ENCODE measurements at regions of chr3 and their contacts with region 1.

Region 1: DNA sequence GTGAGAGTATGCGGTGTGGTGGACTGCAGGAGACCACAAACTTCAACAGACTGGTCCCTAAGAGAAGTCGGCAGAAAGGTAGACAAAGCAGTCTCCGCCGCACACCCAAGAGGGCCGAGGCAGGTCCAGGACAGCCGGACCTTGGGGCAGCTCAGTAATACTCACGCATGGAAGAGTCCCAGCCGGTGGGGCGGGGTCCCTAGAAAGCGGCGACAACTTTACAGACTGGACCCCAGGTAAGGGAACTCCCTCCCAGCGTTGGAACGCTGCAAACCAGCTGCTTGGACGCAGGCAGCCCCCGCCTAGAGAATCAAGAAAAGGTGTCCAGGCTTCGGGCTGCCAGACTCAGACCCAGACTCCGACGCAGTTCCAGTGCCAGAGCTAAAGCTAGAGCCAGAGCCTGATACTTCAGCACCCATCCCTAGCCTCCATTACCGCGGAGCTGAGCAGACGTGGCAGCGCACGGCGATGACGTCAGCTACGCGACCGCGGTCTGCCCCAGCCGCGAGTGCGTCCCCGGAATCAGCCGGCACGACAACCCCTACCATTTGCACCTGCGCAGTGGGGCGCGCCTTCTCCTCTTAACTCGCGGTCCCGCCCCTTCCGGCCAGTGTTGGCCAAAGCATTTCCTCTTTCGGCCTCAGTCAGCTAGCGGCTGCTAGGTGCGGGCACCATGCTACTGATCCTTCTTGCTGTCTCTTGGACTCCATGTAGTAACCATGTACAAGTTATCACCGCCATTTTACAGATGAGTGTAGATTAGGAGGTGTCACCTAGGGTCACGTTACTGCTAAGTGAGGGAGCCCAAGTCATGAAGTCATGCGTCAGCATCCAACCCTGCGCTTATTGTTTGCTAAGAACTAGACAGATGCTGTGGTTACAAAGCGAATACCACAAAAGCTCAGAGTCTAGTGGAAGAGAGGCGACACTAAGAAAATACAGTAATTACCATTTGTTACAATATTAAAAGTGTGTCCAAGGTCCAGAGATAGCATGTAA is at the start of gene TMEM39A:
- DNase-seq: peak; percentile 100
- ATAC-seq: peak; percentile 89 to 96 (median 90)
- H3K4me3 ChIP-seq: peak within 1 kb of the TSS; percentile 67
- H3K4me3 Mint-ChIP-seq: peak within 1 kb of the TSS; percentile 91
- H3K27ac ChIP-seq: peak within 1 kb of the TSS; percentile 100
- H3K27ac Mint-ChIP-seq: peak within 1 kb of the TSS; percentile 96 to 99
- H3K4me1 ChIP-seq: peaks cover 20% of the 10 kb centered on the region
- H3K4me1 Mint-ChIP-seq: peaks cover 35 to 48% of the 10 kb centered on the region in 2 donors
- H3K27me3 ChIP-seq: no peaks in the 10 kb centered on the region
- H3K27me3 Mint-ChIP-seq: no peaks in the 10 kb centered on the region
- CTCF ChIP-seq: no peak
- total RNA-seq, gene TMEM39A: 64.2 to 76.5 (median 64.7) TPM

Region 2: GRCh38 chr3:119240591-119241434 is 222.7 kb before region 1 on chr3 and contains the start of gene B4GALT4:
- intact Hi-C with region 1: loop called (anchors 5 kb)
- DNase-seq: peak; percentile 79 to 80
- ATAC-seq: peak; percentile 78 to 91 (median 84)
- H3K4me3 ChIP-seq: peak within 1 kb of the TSS; percentile 49
- H3K4me3 Mint-ChIP-seq: peak within 1 kb of the TSS; percentile 96
- H3K27ac ChIP-seq: peak within 1 kb of the TSS; percentile 79
- H3K27ac Mint-ChIP-seq: peak within 1 kb of the TSS; percentile 92 to 96
- H3K4me1 ChIP-seq: peaks cover 37% of the 10 kb centered on the region
- H3K4me1 Mint-ChIP-seq: peaks cover 29 to 37% of the 10 kb centered on the region in 2 donors
- H3K27me3 ChIP-seq: no peaks in the 10 kb centered on the region
- H3K27me3 Mint-ChIP-seq: no peaks in the 10 kb centered on the region
- CTCF ChIP-seq: no peak
- total RNA-seq, gene B4GALT4: 35.1 to 54.1 (median 48.8) TPM

Region 3: GRCh38 chr3:119293871-119294695 is 169.4 kb before region 1 on chr3 and contains the start of gene ARHGAP31:
- intact Hi-C with region 1: loop called (anchors 1 kb)
- DNase-seq: peak; percentile 81 to 94
- ATAC-seq: peak; percentile 65 to 82 (median 70)
- H3K4me3 ChIP-seq: peak within 1 kb of the TSS; percentile 82
- H3K4me3 Mint-ChIP-seq: peak within 1 kb of the TSS; percentile 95
- H3K27ac ChIP-seq: peak within 1 kb of the TSS; percentile 99
- H3K27ac Mint-ChIP-seq: peak within 1 kb of the TSS; percentile 95 to 97
- H3K4me1 ChIP-seq: peaks cover 60% of the 10 kb centered on the region
- H3K4me1 Mint-ChIP-seq: peaks cover 72 to 74% of the 10 kb centered on the region in 2 donors
- H3K27me3 ChIP-seq: peaks cover 9% of the 10 kb centered on the region
- H3K27me3 Mint-ChIP-seq: peaks cover 9 to 15% of the 10 kb centered on the region in 2 donors
- CTCF ChIP-seq: no peak
- total RNA-seq, gene ARHGAP31: 4.1 to 8.4 (median 8.4) TPM

Region 4: DNA sequence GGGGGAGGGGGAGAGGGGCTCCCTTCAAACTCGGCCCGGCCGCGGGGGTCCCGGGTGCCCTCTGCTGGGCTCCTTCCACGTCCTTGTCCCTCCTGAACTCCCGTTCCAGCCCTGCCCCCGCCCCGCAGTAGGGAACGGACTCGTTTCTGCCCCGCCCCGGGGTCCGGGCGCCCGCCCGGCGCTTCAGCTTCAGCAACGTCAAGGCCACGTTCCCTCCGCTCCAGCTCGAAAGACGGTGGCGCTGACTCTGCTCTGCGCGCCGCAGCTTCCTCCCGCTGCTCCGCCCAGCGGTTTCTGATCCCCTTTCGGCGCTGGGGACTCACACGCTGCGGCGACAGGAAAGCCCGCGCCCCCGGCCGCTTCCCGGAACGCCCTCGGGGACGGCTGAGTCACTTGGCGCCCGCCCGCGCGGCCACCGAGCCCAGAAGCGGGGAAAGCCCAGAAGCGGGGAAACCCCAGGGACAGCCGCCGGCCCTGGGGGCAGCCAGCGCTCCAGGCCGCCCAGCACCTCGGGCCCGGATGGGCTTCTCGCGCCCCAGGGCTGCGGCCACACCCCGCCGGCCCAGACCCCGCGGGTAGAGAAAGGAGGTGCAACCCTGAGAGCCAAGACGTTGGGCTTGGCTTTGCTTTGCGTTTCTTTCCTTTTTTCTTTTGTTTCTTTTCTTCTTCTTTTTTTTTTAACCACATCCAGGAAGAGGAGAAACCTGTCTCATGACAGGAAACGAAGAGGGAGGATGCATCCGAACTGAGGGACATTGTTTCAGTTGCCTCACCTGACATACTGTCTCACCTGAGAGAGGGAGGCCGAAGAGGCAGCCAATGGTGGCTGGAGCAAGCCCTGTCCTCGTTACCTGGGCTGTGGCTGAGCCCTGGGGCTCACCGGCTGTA is 140.4 kb before region 1 on chr3:
- intact Hi-C with region 1: loop called (anchors 1 kb)
- DNase-seq: peak; percentile 90 to 95
- ATAC-seq: peak; percentile 85 to 94 (median 89)
- H3K4me3 ChIP-seq: peak overlapping the region; percentile 83
- H3K4me3 Mint-ChIP-seq: peak overlapping the region; percentile 98
- H3K27ac ChIP-seq: peak overlapping the region; percentile 92
- H3K27ac Mint-ChIP-seq: peak overlapping the region; percentile 97 to 98
- H3K4me1 ChIP-seq: peaks cover 15% of the 10 kb centered on the region
- H3K4me1 Mint-ChIP-seq: peaks cover 12 to 31% of the 10 kb centered on the region in 2 donors
- H3K27me3 ChIP-seq: no peaks in the 10 kb centered on the region
- H3K27me3 Mint-ChIP-seq: no peaks in the 10 kb centered on the region
- CTCF ChIP-seq: no peak

Region 5: DNA sequence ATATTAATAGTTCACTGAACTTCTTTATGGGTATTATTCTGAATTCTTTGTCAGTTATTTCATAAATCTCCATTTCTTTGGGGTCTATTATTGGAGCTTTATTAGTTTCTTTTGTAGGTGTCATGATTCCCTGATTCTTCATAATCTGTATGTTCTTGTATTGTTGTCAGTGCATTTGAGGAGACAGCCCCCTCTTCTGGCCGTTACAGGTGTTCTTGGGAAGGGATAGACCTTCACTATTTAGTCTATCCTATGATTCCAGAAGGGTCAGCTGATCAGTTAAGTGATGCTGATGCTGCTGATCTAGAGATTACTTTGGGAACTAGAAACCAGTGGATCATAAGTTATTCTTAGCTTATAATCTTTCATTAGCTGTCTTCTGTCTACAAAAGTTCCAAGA is 34.9 kb before region 1 on chr3:
- intact Hi-C with region 1: no loop called
- DNase-seq: no peak
- ATAC-seq: no peak
- H3K4me3 ChIP-seq: no peak overlapping the region
- H3K4me3 Mint-ChIP-seq: no peak overlapping the region
- H3K27ac ChIP-seq: no peak overlapping the region
- H3K27ac Mint-ChIP-seq: no peak overlapping the region
- H3K4me1 ChIP-seq: no peaks in the 10 kb centered on the region
- H3K4me1 Mint-ChIP-seq: no peaks in the 10 kb centered on the region
- H3K27me3 ChIP-seq: no peaks in the 10 kb centered on the region
- H3K27me3 Mint-ChIP-seq: no peaks in the 10 kb centered on the region
- CTCF ChIP-seq: no peak

Region 6: DNA sequence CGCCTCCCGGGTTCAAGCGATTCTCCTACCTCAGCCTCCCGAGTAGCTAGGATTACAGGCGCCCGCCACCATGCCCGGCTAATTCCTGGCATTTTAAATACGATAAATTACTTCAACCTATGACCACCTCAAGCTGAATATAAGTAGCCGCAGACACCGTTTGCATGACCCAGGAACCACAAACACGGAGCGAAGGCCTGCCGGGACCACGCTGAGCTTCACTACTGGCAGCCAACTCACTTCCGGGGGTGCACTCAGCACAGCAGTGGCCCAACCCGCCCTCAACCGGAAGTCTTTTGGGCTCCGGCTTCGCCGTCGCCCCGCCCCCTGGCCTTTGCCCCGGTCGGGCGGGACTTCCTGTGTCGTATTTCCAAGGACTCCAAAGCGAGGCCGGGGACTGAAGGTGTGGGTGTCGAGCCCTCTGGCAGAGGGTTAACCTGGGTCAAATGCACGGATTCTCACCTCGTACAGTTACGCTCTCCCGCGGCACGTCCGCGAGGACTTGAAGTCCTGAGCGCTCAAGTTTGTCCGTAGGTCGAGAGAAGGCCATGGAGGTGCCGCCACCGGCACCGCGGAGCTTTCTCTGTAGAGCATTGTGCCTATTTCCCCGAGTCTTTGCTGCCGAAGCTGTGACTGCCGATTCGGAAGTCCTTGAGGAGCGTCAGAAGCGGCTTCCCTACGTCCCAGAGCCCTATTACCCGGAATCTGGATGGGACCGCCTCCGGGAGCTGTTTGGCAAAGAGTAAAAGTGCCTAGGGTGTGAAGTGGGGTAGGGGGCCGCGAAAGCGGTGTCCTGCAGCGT is 34.9 kb after region 1 on chr3 and contains the start of gene TIMMDC1:
- intact Hi-C with region 1: loop called (anchors 1 kb)
- DNase-seq: peak; percentile 97 to 99
- ATAC-seq: peak; percentile 97 to 100 (median 98)
- H3K4me3 ChIP-seq: peak within 1 kb of the TSS; percentile 87
- H3K4me3 Mint-ChIP-seq: peak within 1 kb of the TSS; percentile 100
- H3K27ac ChIP-seq: peak within 1 kb of the TSS; percentile 93
- H3K27ac Mint-ChIP-seq: peak within 1 kb of the TSS; percentile 98 to 99
- H3K4me1 ChIP-seq: peaks cover 18% of the 10 kb centered on the region
- H3K4me1 Mint-ChIP-seq: peaks cover 30 to 31% of the 10 kb centered on the region in 2 donors
- H3K27me3 ChIP-seq: no peaks in the 10 kb centered on the region
- H3K27me3 Mint-ChIP-seq: no peaks in the 10 kb centered on the region
- CTCF ChIP-seq: no peak
- total RNA-seq, gene TIMMDC1: 31.9 to 50.1 (median 34.1) TPM

Region 7: DNA sequence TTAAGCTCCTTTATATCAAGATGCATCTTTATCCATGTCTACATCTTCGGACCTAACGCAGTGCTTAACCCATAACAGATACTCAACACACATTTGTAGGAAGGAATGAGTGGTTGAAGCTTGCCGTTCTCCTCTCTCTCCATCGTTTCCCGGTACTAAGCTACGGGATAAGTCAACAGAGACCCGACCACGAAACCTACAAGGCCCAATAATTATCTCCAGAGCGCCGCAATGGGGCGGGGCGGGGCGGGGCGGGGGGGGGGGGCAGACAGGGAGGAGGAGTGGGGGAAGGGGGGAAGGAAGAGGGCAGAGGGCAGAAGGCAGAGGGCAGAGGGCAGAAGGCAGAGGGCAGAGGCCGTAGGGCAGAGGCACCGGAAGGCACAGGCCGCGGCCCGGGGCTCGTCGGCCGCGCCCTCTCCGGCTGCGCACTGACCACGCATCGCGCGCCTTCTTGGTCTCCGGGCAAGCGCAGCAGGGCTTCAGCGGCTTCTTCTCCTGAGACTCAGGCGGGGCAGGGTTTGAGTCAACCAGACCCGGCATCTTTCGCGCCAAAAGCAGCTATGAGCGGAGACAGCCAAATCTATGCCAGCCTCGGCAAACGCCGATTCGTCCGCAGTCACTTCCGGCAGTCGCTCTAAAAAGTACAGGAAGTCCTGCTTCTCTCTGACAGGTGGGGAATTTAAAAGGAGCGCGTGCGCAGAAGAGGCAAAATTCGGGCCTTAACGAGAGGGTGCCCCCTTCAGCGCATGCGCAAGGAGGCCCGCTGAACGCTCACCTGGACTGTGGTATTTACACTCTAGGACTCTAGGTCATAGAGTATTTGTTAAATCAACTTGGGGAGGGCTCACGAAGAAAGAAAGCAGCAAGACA is 213.5 kb after region 1 on chr3 and contains the start of gene COX17:
- intact Hi-C with region 1: loop called (anchors 2 kb)
- DNase-seq: peak; percentile 91 to 99
- ATAC-seq: peak; percentile 86 to 92 (median 89)
- H3K4me3 ChIP-seq: peak within 1 kb of the TSS; percentile 60
- H3K4me3 Mint-ChIP-seq: peak within 1 kb of the TSS; percentile 95
- H3K27ac ChIP-seq: peak within 1 kb of the TSS; percentile 93
- H3K27ac Mint-ChIP-seq: peak within 1 kb of the TSS; percentile 97 to 99
- H3K4me1 ChIP-seq: no peaks in the 10 kb centered on the region
- H3K4me1 Mint-ChIP-seq: peaks cover 30 to 31% of the 10 kb centered on the region in 2 donors
- H3K27me3 ChIP-seq: no peaks in the 10 kb centered on the region
- H3K27me3 Mint-ChIP-seq: no peaks in the 10 kb centered on the region
- CTCF ChIP-seq: no peak
- total RNA-seq, gene COX17: 35.6 to 44.8 (median 40.6) TPM

Measured in natural killer cell (primary cell).